PC-3 (cell line): ENCODE measurements at regions of chr18 and their contacts with region 1.

Region 1: DNA sequence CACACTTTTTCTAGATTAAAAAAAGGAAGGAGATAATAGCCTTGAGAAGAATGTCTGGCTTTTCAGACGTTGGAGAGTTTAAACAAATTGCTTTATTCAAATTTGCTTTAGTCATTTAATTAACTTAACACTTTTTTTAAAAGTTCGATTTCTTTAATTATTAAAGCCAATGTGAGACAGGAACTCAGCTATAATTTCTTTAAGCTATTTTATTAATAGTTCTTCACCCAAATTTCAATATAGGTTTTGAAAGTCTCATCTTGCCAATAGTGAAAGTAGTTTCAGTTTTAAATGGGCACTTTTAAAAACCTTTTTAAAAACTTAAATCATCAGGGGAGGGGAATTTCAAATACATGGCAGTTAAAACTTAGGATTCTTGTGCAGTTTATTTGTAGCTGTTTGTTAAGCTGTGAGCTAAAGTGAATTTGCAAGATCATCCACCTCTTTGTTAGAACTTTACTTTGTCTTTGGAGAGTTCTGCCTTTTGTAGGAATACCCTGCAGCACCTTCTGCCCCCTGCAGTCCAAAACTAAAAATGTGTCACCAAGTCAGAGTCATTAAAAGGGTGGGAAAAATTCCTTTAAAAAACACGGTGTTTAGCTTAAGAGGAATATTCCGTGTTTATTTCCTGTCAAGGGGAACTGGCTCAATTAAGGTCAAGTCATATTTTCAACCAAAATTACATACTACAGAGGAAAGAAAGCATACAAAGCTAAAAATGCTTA is 4.6 kb downstream of the TGIF1 start:
- DNase-seq: peak; percentile 76
- ATAC-seq: no peak
- H3K4me3 ChIP-seq: peak overlapping the region; percentile 96
- H3K27ac ChIP-seq: peak overlapping the region; percentile 95
- H3K4me1 ChIP-seq: peaks cover 46% of the 10 kb centered on the region
- H3K27me3 ChIP-seq: no peaks in the 10 kb centered on the region
- CTCF ChIP-seq: peak; percentile 83

Region 2: GRCh38 chr18:3281456-3282400 is 172.8 kb before region 1 on chr18:
- CTCF ChIA-PET with region 1: interaction called, 3 read pairs
- POLR2A ChIA-PET with region 1: interaction called, 12 read pairs
- intact Hi-C with region 1: loop called (anchors 1 kb)
- DNase-seq: peak; percentile 96
- ATAC-seq: peak; percentile 64
- H3K4me3 ChIP-seq: no peak overlapping the region
- H3K27ac ChIP-seq: no peak overlapping the region
- H3K4me1 ChIP-seq: peaks cover 27% of the 10 kb centered on the region
- H3K27me3 ChIP-seq: no peaks in the 10 kb centered on the region
- CTCF ChIP-seq: peak; percentile 87

Region 3: DNA sequence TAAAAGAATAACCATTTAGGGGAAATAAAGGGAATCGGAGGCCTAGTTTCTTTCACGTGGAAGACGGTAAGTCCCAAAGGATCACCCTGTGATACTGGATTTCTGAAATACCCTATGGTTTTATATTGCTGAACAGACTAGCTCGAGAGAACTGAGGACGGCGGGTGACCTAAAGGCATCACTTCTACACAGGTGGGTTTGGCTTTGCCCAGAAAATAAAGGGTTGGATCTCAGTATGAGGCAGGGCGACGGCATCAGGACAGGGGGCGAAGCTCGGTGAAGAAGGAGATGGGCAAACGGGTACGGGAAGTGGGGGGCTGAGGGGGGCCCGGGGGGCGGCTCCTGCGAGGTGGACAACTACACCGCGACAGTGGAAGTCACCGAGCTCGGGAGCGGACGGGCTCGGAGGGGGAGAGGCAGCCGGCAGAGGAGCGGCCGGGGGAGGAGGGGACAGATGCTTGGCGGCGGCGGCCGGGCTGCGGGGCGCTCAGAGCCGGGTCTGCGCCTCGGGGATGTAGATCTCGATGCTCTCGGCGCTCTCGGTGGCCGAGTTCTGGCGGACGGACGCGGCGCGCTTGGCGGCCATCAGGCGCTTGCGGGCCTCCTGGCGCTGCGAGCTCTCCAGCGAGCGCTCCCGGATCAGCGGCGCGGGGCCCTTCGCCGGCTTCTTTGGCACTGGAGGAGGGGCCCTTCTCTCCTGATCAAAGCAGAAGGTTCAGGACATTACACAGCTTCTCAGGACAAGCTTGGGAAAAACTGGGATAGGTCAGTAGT is 44.4 kb after region 1 on chr18:
- CTCF ChIA-PET with region 1: no interaction called
- POLR2A ChIA-PET with region 1: no interaction called
- intact Hi-C with region 1: loop called (anchors 5 kb)
- DNase-seq: no peak
- ATAC-seq: peak; percentile 80
- H3K4me3 ChIP-seq: peak overlapping the region; percentile 59
- H3K27ac ChIP-seq: no peak overlapping the region
- H3K4me1 ChIP-seq: peaks cover 8% of the 10 kb centered on the region
- H3K27me3 ChIP-seq: no peaks in the 10 kb centered on the region
- CTCF ChIP-seq: no peak

Region 4: DNA sequence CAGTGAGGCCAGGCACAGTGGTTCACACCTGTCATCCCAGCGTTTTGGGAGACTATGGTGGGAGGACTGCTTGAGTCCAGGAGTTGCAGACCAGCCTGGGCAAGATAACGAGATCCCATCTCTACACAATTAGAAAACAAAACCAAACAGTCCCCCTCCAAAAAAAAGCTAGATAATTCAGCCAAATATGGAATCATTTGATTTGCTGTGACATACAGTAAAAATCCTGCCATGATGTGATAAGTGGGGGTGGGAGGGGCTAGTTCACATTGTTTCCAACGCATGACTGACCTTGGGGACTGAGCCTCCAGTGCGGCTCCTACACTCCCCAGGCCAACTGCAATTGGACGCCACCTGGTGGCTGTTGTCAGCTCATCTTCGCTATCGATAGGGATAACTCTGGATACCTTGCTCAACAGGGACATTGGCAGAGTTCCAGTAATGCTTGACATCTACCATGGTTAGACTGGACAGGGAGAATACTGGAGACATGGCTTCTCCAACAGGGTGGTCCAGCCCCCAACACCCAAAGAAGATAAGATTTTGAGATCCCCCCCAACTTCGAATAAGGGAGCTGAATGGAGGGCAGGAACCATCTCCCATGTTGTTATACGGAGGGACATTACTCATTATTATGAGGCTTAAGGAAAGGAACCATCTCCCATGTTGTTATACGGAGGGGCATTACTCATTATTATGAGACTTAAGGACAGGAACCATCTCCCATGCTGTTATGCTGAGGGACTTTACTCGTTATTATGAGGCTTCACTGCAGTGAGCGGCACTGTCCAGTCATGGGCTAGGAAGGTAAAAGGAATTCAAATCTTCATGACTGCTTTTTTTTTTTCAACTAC is 131.4 kb after region 1 on chr18:
- CTCF ChIA-PET with region 1: interaction called, 15 read pairs
- POLR2A ChIA-PET with region 1: interaction called, 5 read pairs
- intact Hi-C with region 1: loop called (anchors 1 kb)
- DNase-seq: peak; percentile 93
- ATAC-seq: peak; percentile 80
- H3K4me3 ChIP-seq: no peak overlapping the region
- H3K27ac ChIP-seq: no peak overlapping the region
- H3K4me1 ChIP-seq: peaks cover 20% of the 10 kb centered on the region
- H3K27me3 ChIP-seq: no peaks in the 10 kb centered on the region
- CTCF ChIP-seq: peak; percentile 95

Region 5: DNA sequence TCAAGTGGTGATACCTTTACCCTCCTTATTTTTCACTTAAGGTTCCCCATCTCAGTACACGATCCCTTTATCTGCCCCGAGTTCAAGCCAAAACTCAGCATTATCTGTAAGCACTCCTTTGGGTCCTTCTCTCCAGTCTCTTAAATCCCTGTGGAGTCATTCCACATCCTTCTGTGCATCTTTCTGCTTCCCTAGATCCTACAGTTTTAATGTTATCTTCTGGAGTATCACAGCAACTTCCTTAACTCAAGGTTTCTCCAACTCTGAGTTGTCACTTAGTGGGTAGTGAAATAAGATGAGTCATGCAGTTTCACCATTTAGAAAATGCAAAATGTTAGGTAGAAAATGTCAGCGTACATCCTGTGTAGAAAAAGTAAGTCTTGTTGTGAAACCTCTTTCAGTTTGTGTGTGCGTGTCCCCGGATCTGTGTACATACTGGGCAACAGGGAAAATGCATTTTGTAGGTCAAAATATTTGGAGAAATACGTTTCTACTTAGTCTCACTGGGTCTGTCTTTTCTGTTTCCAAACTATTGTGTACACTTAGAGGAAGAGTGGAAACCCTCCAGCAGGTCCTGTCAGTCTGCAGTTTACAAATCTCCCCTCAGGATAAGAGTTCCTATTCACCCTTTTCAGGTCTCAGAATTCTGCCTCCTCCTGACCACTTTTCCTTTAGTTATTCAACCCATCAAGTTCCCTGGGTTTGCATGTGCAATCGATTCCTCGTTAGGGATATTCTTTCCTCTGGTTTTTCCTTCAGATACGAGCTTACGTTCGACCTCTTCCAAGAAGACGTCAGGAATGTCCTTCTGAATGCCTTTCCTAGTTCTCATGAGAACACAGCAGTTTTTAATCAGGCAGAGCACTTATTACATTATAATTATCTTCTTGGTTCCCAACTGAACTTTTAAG is 150.2 kb after region 1 on chr18:
- CTCF ChIA-PET with region 1: interaction called, 3 read pairs
- POLR2A ChIA-PET with region 1: interaction called, 24 read pairs
- intact Hi-C with region 1: no loop called
- DNase-seq: peak; percentile 94
- ATAC-seq: peak; percentile 38
- H3K4me3 ChIP-seq: peak overlapping the region; percentile 70
- H3K27ac ChIP-seq: peak overlapping the region; percentile 99
- H3K4me1 ChIP-seq: peaks cover 42% of the 10 kb centered on the region
- H3K27me3 ChIP-seq: no peaks in the 10 kb centered on the region
- CTCF ChIP-seq: no peak